Right ventricle myocardium superior (tissue), 1 donor: ENCODE measurements at regions of chr5 and their contacts with region 1.

Region 1: DNA sequence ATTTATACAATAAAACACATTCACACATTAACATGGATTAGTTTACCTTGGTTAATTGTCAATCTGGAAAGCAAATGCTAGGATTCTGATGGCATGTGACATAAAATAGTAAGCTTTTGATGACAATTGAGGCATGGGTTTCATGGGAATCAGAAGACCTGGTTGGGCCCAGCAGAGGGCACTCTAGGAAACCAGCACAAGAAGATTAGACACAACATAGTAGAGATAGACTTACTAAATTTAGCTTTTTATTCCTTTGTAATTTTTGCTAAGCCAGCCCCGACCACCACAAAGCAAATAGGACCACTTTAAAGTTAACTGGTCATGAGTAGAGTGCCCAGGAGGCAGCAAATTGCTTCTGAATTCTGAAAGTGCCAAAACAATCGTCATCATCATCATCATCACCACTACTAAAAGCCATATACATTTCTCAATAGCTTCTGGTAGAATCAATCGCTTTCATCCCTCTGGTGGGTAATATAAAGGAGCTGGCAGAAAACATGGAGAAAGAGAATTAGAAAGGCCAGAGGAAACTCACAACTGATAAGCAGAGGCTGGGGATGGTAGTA is 163.2 kb downstream of the ARRDC3 start:
- DNase-seq: peak; percentile 39
- ATAC-seq: no peak

Region 2: DNA sequence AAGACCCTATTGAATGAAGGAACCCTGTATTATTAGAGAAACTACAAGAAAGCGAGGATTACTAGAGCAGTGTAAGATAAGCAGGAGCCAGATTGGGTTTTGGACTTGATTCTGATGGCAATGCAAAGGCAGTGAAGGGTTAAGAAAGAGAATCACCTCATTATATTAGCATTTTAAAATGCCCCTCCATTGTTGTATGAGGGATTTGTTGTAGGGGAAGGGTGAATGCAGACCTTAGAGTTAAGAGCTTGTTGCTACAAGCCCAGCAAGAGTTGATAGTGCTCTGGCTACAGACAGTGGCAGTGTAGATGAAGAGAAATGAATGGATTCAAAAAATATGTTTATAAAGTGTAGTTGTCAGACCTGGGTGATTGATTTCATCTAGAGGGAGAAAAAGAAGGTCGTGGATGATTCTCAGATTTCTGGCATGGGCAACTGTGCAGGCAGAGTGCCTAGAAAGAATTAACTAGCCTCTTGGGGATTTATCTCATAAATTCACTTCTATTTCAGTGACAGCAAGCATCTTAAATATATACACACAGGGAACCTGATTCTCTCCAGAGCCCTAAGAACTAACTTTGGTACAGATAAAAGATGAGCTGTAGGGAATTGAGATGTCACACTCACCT is 181.6 kb before region 1 on chr5:
- intact Hi-C with region 1: no loop called
- DNase-seq: no peak
- ATAC-seq: no peak

Region 3: GRCh38 chr5:91126448-91126847 is 93.4 kb before region 1 on chr5:
- intact Hi-C with region 1: loop called (anchors 10 kb)
- DNase-seq: no peak
- ATAC-seq: peak; percentile 50

Region 4: GRCh38 chr5:91162534-91163381 is 57.1 kb before region 1 on chr5:
- intact Hi-C with region 1: no loop called
- DNase-seq: peak; percentile 50
- ATAC-seq: peak; percentile 95

Region 5: GRCh38 chr5:91311697-91312501 is 92.0 kb after region 1 on chr5:
- intact Hi-C with region 1: no loop called
- DNase-seq: peak; percentile 74
- ATAC-seq: peak; percentile 77